ENCODE measurements at regions of chr2 and their contacts with region 1.

Region 1: GRCh38 chr2:195318440-195319111 is 338.4 kb upstream of the SLC39A10 start:
- DNase-seq: peak; percentile 7 to 68 (median 20)
- ATAC-seq: peak; percentile 69
- H3K4me3 ChIP-seq: no peak overlapping the region
- H3K27ac ChIP-seq: no peak overlapping the region
- H3K4me1 ChIP-seq: no peaks in the 10 kb centered on the region; a peak in 2 of 5 replicates
- H3K27me3 ChIP-seq: no peaks in the 10 kb centered on the region
- CTCF ChIP-seq: peak; percentile 33 to 72 (median 34); a peak in 4 of 6 replicates
- EP300 ChIP-seq: no peak
- POLR2A ChIP-seq: no peak
- RAD21 ChIP-seq: peak; percentile 78 to 79

Region 2: GRCh38 chr2:194545978-194546377 is 772.6 kb before region 1 on chr2:
- CTCF ChIA-PET with region 1: no interaction called
- POLR2A ChIA-PET with region 1: no interaction called
- in situ Hi-C with region 1: no loop called
- intact Hi-C with region 1: loop called (anchors 10 kb)
- DNase-seq: no peak
- ATAC-seq: no peak
- H3K4me3 ChIP-seq: no peak overlapping the region
- H3K27ac ChIP-seq: no peak overlapping the region
- H3K4me1 ChIP-seq: no peaks in the 10 kb centered on the region
- H3K27me3 ChIP-seq: no peaks in the 10 kb centered on the region
- CTCF ChIP-seq: no peak
- EP300 ChIP-seq: no peak
- POLR2A ChIP-seq: no peak
- RAD21 ChIP-seq: no peak

Region 3: GRCh38 chr2:195368249-195369217 is 50.0 kb after region 1 on chr2:
- CTCF ChIA-PET with region 1: no interaction called
- POLR2A ChIA-PET with region 1: no interaction called
- in situ Hi-C with region 1: no loop called
- intact Hi-C with region 1: no loop called
- DNase-seq: peak in 2 of 4 experiments; percentile 8 to 77
- ATAC-seq: peak; percentile 74
- H3K4me3 ChIP-seq: no peak overlapping the region; the same call in 1 of the 2 replicates
- H3K27ac ChIP-seq: peak overlapping the region; percentile 80
- H3K4me1 ChIP-seq: peaks cover 4 to 14% of the 10 kb centered on the region in 2 experiments; a peak in 3 of 5 replicates
- H3K27me3 ChIP-seq: no peaks in the 10 kb centered on the region
- CTCF ChIP-seq: no peak
- EP300 ChIP-seq: peak; percentile 55; the same call in 1 of the 2 replicates
- POLR2A ChIP-seq: no peak
- RAD21 ChIP-seq: no peak

Region 4: DNA sequence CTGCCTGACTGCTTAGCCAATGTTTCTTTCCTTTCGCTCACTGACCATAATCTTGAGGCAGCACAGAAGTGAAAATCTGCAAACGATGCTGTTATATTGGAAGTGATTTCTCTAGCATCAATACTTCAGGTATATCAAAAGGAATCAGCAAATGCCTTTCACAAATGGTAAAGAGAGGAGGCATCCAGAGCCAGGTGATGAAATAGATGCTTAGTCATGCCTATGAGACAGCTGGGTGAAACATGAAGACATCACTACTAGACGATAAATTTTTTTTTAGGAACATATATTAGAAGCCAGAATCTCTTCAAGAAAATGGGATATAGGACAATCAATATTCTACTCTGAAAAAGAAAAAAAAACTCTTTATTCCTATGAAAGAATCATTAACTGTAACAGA is 89.2 kb after region 1 on chr2:
- CTCF ChIA-PET with region 1: no interaction called
- POLR2A ChIA-PET with region 1: no interaction called
- in situ Hi-C with region 1: no loop called
- intact Hi-C with region 1: loop called (anchors 10 kb)
- DNase-seq: peak in 2 of 4 experiments; percentile 18 to 38
- ATAC-seq: peak; percentile 68
- H3K4me3 ChIP-seq: no peak overlapping the region
- H3K27ac ChIP-seq: peak overlapping the region; percentile 69; the same call in 1 of the 3 replicates
- H3K4me1 ChIP-seq: peaks cover 0 to 10% of the 10 kb centered on the region in 2 experiments; a peak in 2 of 5 replicates
- H3K27me3 ChIP-seq: no peaks in the 10 kb centered on the region
- CTCF ChIP-seq: no peak
- EP300 ChIP-seq: no peak
- POLR2A ChIP-seq: no peak
- RAD21 ChIP-seq: no peak

Region 5: DNA sequence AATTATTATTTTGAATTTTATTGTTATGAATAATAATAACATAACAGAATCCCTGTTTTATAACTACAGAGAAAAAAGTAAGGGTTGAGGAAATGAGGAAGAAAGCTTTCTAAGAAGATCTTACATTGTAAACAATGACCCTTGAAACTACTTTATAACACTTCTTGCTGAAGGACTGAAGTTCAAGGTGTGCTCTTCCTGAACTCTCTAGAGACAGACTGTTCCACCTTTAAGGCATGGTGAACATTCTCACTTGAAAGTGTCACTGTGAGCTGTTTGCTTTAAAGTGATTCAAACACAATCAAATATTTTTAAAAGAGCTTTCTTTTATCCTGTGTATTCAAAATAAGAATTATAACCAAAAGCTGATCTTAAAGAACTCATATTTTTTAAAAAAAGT is 618.6 kb after region 1 on chr2:
- CTCF ChIA-PET with region 1: no interaction called
- POLR2A ChIA-PET with region 1: no interaction called
- in situ Hi-C with region 1: no loop called
- intact Hi-C with region 1: loop called (anchors 5 kb)
- DNase-seq: no peak
- ATAC-seq: no peak
- H3K4me3 ChIP-seq: no peak overlapping the region
- H3K27ac ChIP-seq: no peak overlapping the region
- H3K4me1 ChIP-seq: no peaks in the 10 kb centered on the region
- H3K27me3 ChIP-seq: no peaks in the 10 kb centered on the region
- CTCF ChIP-seq: no peak
- EP300 ChIP-seq: no peak
- POLR2A ChIP-seq: no peak
- RAD21 ChIP-seq: no peak